Pancreas (tissue), 10 donors: ENCODE measurements at regions of chr15 and their contacts with region 1.

Region 1: DNA sequence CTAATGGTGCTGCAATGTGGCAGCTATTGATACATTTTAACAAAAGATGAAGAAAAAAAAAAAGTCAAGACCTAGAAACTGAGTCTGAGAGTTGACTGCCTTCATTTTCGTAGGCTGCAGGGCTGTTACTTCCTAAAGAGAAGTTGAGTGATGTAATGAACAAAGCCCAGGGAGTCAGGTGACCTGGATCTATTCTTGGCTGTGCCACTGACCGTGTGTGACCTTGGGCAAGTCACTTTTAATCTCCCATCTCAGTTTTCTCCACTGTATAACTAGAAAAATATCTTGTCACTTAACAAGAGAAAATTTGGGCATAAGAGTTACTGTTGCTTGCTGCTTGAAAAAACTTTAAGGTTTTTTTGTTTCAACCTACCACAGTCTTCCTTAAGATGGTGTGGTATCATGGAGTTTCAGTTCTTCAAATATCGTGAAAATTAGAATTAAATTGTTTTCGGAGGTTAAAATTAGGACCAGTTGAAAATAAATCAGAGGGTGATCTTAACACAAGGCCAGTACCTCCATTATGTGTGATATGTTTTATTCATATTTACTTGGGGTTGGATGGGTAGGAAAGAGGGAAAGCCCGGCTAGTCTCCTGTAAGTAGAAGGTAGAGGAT is 5.8 kb downstream of the FMN1 start:
- DNase-seq: peak in 1 of 6 donors; percentile 23
- ATAC-seq: peak in 2 of 4 donors; percentile 47 to 73
- H3K4me3 ChIP-seq: no peak overlapping the region
- H3K27ac ChIP-seq: no peak overlapping the region
- H3K4me1 ChIP-seq: peaks cover 0 to 2% (median 0%) of the 10 kb centered on the region in 3 donors
- H3K27me3 ChIP-seq: no peaks in the 10 kb centered on the region
- CTCF ChIP-seq: no peak

Region 2: GRCh38 chr15:33242669-33243191 is 54.0 kb after region 1 on chr15:
- intact Hi-C with region 1: loop called in 1 of 3 experiments (anchors 10 kb)
- DNase-seq: no peak
- ATAC-seq: no peak
- H3K4me3 ChIP-seq: no peak overlapping the region
- H3K27ac ChIP-seq: no peak overlapping the region
- H3K4me1 ChIP-seq: no peaks in the 10 kb centered on the region
- H3K27me3 ChIP-seq: peaks cover 0 to 9% (median 0%) of the 10 kb centered on the region in 4 donors
- CTCF ChIP-seq: no peak